ENCODE measurements at regions of chr14 and their contacts with region 1.

Region 1: GRCh38 chr14:70907176-70907995 is at the start of gene PCNX1:
- DNase-seq: no peak
- H3K4me3 ChIP-seq: peak within 1 kb of the TSS; percentile 91
- H3K27me3 ChIP-seq: no peaks in the 10 kb centered on the region
- CTCF ChIP-seq: peak; percentile 57
- polyA plus RNA-seq, gene PCNX1: 33.2 and 47.8 TPM in 2 replicates

Region 2: DNA sequence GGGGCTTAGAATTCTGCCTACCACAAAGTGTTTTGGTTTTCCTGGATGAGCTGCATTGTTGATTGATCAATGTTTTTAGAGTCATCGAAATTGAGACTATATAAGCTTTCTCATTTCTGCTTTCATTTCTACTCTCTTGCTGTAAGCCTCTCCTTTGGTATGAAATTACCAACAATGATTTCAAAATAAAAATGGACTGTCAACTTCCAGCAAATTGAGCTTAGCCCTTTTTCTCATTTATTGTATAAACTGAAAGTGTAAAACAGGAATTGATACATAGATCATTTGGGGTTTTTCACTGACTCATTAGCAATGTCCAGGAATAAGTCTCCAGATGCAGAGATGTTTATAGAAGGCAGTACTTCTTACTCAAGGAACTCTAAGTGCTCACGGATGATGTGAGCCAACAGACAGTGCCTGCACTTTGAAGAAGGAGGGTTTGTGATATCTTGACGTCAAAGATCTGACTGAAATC is 20.1 kb before region 1 on chr14:
- CTCF ChIA-PET with region 1: interaction called, 13 read pairs
- POLR2A ChIA-PET with region 1: no interaction called
- DNase-seq: no peak
- H3K4me3 ChIP-seq: no peak overlapping the region
- H3K27me3 ChIP-seq: no peaks in the 10 kb centered on the region
- CTCF ChIP-seq: no peak

Region 3: GRCh38 chr14:70919774-70920173 is 12.4 kb after region 1 on chr14:
- CTCF ChIA-PET with region 1: interaction called, 14 read pairs
- POLR2A ChIA-PET with region 1: no interaction called
- DNase-seq: no peak
- H3K4me3 ChIP-seq: no peak overlapping the region
- H3K27me3 ChIP-seq: no peaks in the 10 kb centered on the region
- CTCF ChIP-seq: no peak

Region 4: DNA sequence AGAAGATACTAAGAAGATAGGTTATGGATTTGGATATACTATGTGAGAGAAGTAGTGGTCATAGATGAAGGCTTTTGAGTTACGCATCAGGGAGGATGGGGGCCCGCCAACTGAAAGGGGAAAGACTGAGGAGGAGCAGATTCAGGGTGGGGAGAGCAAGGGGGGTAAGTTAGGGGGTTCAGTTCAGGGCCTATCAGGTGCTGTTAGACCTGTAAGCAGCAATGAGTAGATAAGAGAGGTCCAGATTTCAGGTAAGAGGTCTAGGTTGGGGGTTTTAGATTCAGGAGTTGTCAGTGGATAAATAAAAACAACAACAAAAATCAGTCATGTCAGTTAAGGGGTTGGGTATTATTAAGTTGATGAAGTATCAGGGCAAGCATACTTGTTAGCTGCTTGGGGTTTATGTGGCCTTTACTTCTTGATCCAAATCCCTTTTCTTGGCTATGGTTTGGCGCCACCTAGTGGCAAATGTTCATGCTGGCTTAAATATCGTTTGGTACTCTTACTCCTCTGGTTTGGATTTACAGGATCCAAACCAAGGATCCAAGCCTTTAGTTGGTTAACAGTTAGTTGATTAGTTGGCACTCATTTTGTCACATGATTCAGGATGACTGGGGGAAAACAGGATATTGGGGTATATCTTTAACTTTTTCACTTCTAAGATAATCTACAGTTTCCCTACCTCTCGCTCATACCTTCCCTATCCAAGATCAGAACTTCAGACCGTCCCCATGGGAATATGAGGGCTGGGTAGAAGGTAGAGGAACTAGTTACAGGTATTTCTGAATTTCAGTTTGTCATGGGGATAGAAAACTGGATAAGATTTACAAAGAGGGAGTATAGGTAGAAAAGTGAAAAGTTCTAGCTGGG is 65.0 kb after region 1 on chr14:
- CTCF ChIA-PET with region 1: interaction called, 12 read pairs
- POLR2A ChIA-PET with region 1: no interaction called
- DNase-seq: peak; percentile 32
- H3K4me3 ChIP-seq: no peak overlapping the region
- H3K27me3 ChIP-seq: no peaks in the 10 kb centered on the region
- CTCF ChIP-seq: peak; percentile 87

Region 5: DNA sequence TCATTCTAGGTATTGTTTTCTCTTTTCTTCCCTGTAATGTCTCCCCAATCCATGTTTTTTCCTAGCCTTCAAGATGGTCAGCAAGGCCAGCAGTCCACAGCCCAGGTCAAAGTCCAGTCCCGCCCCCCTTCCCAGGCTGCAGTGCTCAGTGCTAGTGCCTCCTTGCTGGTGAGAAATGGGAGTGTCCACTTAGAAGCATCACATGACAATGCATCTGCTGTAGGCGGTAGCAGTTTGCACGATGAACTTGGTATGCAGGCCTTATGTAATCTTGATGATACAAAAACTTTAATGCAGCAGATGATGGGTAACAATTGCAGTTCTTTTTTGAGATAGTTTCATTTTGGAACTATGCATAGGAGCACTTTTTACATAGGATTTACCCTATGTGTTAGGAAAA is 88.3 kb after region 1 on chr14:
- CTCF ChIA-PET with region 1: no interaction called
- POLR2A ChIA-PET with region 1: no interaction called
- DNase-seq: no peak
- H3K4me3 ChIP-seq: no peak overlapping the region
- H3K27me3 ChIP-seq: no peaks in the 10 kb centered on the region
- CTCF ChIP-seq: no peak